ENCODE measurements at regions of chr6 and their contacts with region 1.

Region 1: GRCh38 chr6:97059473-97059872 is 134.9 kb downstream of the KLHL32 start:
- DNase-seq: peak; percentile 30
- H3K4me3 ChIP-seq: no peak overlapping the region
- H3K27ac ChIP-seq: no peak overlapping the region
- H3K4me1 ChIP-seq: no peaks in the 10 kb centered on the region
- H3K27me3 ChIP-seq: peaks cover 10 to 13% of the 10 kb centered on the region in 2 experiments
- CTCF ChIP-seq: peak; percentile 13 to 21
- POLR2A ChIP-seq: no peak

Region 2: DNA sequence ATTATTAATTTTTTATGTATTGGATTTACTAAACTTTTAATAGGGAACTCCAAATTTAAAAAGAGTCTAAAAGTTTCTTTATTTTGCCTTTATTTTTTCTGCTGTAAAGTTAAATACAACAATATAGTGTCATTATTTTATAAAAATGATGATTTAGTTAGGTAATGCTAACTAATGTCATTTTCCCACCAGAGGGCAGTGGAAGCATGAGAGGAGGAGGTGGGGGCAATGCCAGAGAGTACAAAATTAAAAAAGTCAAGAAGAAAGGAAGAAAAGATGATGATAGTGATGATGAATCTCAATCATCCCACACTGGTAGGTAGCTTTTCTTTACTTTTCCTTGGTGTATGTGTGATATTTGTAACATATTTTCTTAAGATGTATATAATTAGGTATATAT is 516.8 kb before region 1 on chr6:
- CTCF ChIA-PET with region 1: interaction called, 13 read pairs
- POLR2A ChIA-PET with region 1: no interaction called
- dilution Hi-C with region 1: no loop called
- intact Hi-C with region 1: loop called (anchors 1 kb)
- DNase-seq: no peak
- H3K4me3 ChIP-seq: no peak overlapping the region
- H3K27ac ChIP-seq: no peak overlapping the region
- H3K4me1 ChIP-seq: no peaks in the 10 kb centered on the region
- H3K27me3 ChIP-seq: no peaks in the 10 kb centered on the region
- CTCF ChIP-seq: peak in 1 of 2 donors; percentile 13
- POLR2A ChIP-seq: no peak

Region 3: GRCh38 chr6:96626759-96627364 is 432.6 kb before region 1 on chr6:
- CTCF ChIA-PET with region 1: interaction called, 43 read pairs
- POLR2A ChIA-PET with region 1: no interaction called
- dilution Hi-C with region 1: no loop called
- intact Hi-C with region 1: loop called (anchors 1 kb)
- DNase-seq: peak; percentile 17
- H3K4me3 ChIP-seq: no peak overlapping the region
- H3K27ac ChIP-seq: no peak overlapping the region
- H3K4me1 ChIP-seq: no peaks in the 10 kb centered on the region
- H3K27me3 ChIP-seq: no peaks in the 10 kb centered on the region
- CTCF ChIP-seq: peak in 1 of 2 donors; percentile 6
- POLR2A ChIP-seq: no peak

Region 4: GRCh38 chr6:97262676-97263075 is 203.2 kb after region 1 on chr6:
- CTCF ChIA-PET with region 1: no interaction called
- POLR2A ChIA-PET with region 1: no interaction called
- dilution Hi-C with region 1: no loop called
- intact Hi-C with region 1: no loop called
- DNase-seq: no peak
- H3K4me3 ChIP-seq: no peak overlapping the region
- H3K27ac ChIP-seq: no peak overlapping the region
- H3K4me1 ChIP-seq: peaks cover 4% of the 10 kb centered on the region
- H3K27me3 ChIP-seq: no peaks in the 10 kb centered on the region
- CTCF ChIP-seq: no peak
- POLR2A ChIP-seq: no peak